ENCODE measurements at regions of chr7 and their contacts with region 1.

Region 1: DNA sequence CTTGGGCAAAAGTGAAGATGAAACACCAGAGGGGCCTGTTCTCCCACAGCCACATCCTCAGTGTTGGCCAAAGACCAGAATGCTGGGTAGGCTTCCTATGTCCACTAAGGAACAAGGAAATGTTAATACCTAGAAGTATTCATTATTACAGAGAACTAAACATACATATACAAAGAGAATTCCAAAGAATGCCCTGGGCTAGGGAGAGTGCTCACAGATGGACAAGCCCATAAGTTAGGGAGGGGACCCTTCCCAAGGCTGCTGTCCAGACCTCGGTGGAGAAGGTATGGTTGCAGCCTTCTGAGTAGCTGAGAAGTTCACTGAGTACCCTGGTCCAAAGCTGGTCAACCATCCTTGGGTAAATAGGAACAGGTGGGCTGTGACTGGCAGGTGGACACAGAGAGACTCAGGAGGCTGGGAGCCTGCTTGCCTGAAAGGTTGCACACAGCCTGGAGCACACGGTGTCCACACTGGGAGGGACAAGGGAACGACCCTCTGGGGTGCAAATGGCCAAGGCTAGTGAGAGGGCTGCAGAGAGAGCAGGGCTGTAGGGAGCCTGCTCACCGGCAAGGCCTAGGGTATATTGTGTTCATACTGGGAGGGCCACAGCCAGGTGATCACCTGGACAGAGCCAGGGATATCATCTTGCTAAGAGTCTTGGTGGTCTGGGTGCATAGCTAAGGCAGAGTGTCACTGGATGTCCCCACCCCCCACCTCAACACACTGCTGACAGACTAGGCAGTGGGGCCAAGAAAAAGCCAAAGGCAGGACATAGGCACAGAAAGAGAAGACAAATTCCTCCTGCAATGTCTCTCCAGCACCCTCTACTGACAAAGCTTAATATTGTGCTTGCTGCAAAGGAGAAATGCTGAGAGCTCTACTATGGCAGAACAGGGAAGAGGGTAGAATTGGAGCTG is 40.3 kb downstream of the CPVL start:
- DNase-seq: peak; percentile 40
- H3K4me3 Mint-ChIP-seq: no peak overlapping the region
- H3K27ac Mint-ChIP-seq: no peak overlapping the region
- H3K4me1 Mint-ChIP-seq: no peaks in the 10 kb centered on the region
- H3K27me3 Mint-ChIP-seq: peaks cover 16% of the 10 kb centered on the region

Region 2: GRCh38 chr7:28615091-28615490 is 490.9 kb before region 1 on chr7:
- CTCF ChIA-PET with region 1: no interaction called
- DNase-seq: no peak
- H3K4me3 Mint-ChIP-seq: no peak overlapping the region
- H3K27ac Mint-ChIP-seq: no peak overlapping the region
- H3K4me1 Mint-ChIP-seq: no peaks in the 10 kb centered on the region
- H3K27me3 Mint-ChIP-seq: peaks cover 15% of the 10 kb centered on the region

Region 3: GRCh38 chr7:28926871-28927597 is 179.0 kb before region 1 on chr7:
- CTCF ChIA-PET with region 1: interaction called, 156 read pairs
- DNase-seq: peak; percentile 66
- H3K4me3 Mint-ChIP-seq: peak overlapping the region; percentile 75
- H3K27ac Mint-ChIP-seq: no peak overlapping the region
- H3K4me1 Mint-ChIP-seq: peaks cover 20% of the 10 kb centered on the region
- H3K27me3 Mint-ChIP-seq: peaks cover 21% of the 10 kb centered on the region

Region 4: DNA sequence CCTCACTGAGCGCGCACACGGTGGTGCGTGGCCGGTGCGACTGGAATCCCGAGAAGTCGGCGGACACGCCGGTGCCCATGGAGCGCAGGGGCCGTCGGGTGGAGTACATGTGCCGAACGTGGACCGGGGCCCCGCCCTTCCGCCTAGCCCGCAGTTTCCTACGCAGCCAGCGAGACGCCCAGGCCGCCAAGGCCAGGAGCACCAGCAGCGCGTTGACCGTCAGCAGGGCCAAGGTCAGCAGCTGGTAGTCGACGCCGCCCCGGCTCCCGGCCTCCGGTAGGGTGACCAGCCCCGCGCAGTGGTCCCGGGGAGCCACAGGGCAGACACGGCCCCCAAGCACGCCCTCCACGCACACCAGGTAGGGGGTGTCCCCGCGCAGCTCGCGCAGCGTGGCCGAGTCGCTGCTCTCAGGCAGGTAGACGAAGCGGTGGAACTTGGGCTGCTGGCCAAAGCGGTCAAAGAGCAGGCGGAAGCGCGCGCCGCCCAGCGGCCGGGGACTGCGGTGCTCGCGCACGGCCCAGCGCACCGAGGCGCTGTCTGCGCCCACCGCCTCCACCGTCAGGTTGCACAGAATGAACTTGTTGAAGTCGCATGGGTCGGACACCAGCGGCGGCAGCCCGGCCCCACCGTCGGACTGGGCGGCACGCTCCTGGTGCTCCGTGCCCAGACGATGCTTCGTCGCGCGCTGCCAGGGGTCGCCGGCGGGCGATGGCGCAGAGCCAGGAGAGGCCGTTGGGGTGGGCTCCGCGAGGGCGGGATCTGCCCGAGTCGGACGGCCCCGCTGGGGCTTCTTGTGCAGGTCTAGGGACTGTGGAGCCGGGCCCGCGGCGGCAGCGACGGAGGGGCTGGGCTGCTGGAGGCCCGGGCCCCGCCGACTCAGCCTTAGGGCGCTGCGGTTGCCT is 150.0 kb before region 1 on chr7:
- CTCF ChIA-PET with region 1: interaction called, 27 read pairs
- DNase-seq: peak; percentile 27
- H3K4me3 Mint-ChIP-seq: no peak overlapping the region
- H3K27ac Mint-ChIP-seq: no peak overlapping the region
- H3K4me1 Mint-ChIP-seq: peaks cover 9% of the 10 kb centered on the region
- H3K27me3 Mint-ChIP-seq: peaks cover 65% of the 10 kb centered on the region

Region 5: GRCh38 chr7:29005829-29006228 is 100.2 kb before region 1 on chr7:
- CTCF ChIA-PET with region 1: no interaction called
- DNase-seq: no peak
- H3K4me3 Mint-ChIP-seq: no peak overlapping the region
- H3K27ac Mint-ChIP-seq: no peak overlapping the region
- H3K4me1 Mint-ChIP-seq: no peaks in the 10 kb centered on the region
- H3K27me3 Mint-ChIP-seq: peaks cover 3% of the 10 kb centered on the region

Region 6: GRCh38 chr7:29091715-29092114 is 14.3 kb before region 1 on chr7:
- CTCF ChIA-PET with region 1: interaction called, 11 read pairs
- DNase-seq: peak; percentile 31
- H3K4me3 Mint-ChIP-seq: peak overlapping the region; percentile 82
- H3K27ac Mint-ChIP-seq: peak overlapping the region; percentile 92
- H3K4me1 Mint-ChIP-seq: peaks cover 34% of the 10 kb centered on the region
- H3K27me3 Mint-ChIP-seq: peaks cover 14% of the 10 kb centered on the region

Region 7: GRCh38 chr7:29116361-29117200 is 10.6 kb after region 1 on chr7:
- CTCF ChIA-PET with region 1: interaction called, 10 read pairs
- DNase-seq: no peak
- H3K4me3 Mint-ChIP-seq: no peak overlapping the region
- H3K27ac Mint-ChIP-seq: no peak overlapping the region
- H3K4me1 Mint-ChIP-seq: peaks cover 14% of the 10 kb centered on the region
- H3K27me3 Mint-ChIP-seq: peaks cover 31% of the 10 kb centered on the region

Measured in activated naive CD4-positive, alpha-beta T cell treated with anti-CD3 and anti-CD28 coated beads, Interleukin-2, amount 10 ng/mL, durations not matched to agents 7 days and 5 days (primary cell).